ENCODE measurements at regions of chr13 and their contacts with region 1.

Region 1: GRCh38 chr13:21717817-21718216 is 46.9 kb downstream of the FGF9 start:
- DNase-seq: no peak
- ATAC-seq: no peak
- H3K4me3 ChIP-seq: no peak overlapping the region
- H3K27ac ChIP-seq: no peak overlapping the region
- H3K4me1 ChIP-seq: no peaks in the 10 kb centered on the region
- H3K27me3 ChIP-seq: no peaks in the 10 kb centered on the region
- CTCF ChIP-seq: no peak
- POLR2A ChIP-seq: no peak

Region 2: GRCh38 chr13:21812192-21812626 is 94.4 kb after region 1 on chr13:
- in situ Hi-C with region 1: loop called in 1 of 4 experiments (anchors 25 kb)
- intact Hi-C with region 1: no loop called
- DNase-seq: no peak
- ATAC-seq: no peak
- H3K4me3 ChIP-seq: no peak overlapping the region
- H3K27ac ChIP-seq: no peak overlapping the region
- H3K4me1 ChIP-seq: no peaks in the 10 kb centered on the region
- H3K27me3 ChIP-seq: no peaks in the 10 kb centered on the region
- CTCF ChIP-seq: no peak
- POLR2A ChIP-seq: no peak

Region 3: GRCh38 chr13:21853779-21854178 is 136.0 kb after region 1 on chr13:
- in situ Hi-C with region 1: no loop called
- intact Hi-C with region 1: no loop called
- DNase-seq: no peak
- ATAC-seq: no peak
- H3K4me3 ChIP-seq: no peak overlapping the region
- H3K27ac ChIP-seq: no peak overlapping the region
- H3K4me1 ChIP-seq: no peaks in the 10 kb centered on the region
- H3K27me3 ChIP-seq: no peaks in the 10 kb centered on the region
- CTCF ChIP-seq: no peak
- POLR2A ChIP-seq: no peak